ENCODE measurements at regions of chr1 and their contacts with region 1.

Region 1: GRCh38 chr1:156456622-156457465 is 43.7 kb downstream of the MEF2D start:
- DNase-seq: peak; percentile 98 to 99 (median 98)
- H3K4me3 ChIP-seq: peak overlapping the region; percentile 36 to 81 (median 74)
- H3K27ac ChIP-seq: peak overlapping the region; percentile 64 to 89
- H3K4me1 ChIP-seq: peaks cover 5 to 26% (median 17%) of the 10 kb centered on the region in 4 experiments
- H3K27me3 ChIP-seq: peaks cover 0 to 1% (median 0%) of the 10 kb centered on the region in 5 experiments

Region 2: DNA sequence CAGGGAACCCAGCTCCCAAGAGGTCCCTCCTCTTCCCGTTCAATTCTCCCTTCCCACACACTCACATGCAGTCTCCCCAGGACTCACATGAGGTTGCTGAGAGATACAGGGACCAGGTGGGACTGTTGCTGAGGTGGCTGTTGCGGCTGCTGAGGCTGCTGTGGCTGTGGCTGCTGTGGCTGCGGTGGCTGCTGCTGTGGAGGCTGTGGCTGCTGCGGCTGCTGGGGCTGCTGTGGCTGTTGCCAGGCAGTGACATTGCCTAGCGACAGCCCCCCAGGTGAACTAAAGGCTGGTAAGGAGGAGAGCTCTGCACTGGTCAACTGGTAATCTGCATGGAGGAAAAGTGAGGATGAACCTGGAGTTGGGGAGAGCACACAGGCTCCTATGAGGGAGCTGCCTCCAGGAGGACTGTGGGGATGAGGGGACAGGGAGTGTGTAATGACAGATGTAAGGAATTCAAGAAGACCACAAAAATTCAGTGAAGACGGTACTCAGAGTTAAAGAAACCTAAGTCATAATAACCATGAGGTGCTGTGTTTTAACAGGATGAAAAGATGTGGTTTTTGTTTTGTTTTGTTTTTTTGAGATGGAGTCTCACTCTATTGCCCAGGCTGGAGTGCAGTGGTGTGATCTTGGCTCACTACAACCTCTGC is 12.0 kb after region 1 on chr1:
- CTCF ChIA-PET with region 1: interaction called, 14 read pairs
- POLR2A ChIA-PET with region 1: interaction called, 4 read pairs
- DNase-seq: no peak
- H3K4me3 ChIP-seq: no peak overlapping the region
- H3K27ac ChIP-seq: no peak overlapping the region
- H3K4me1 ChIP-seq: no peaks in the 10 kb centered on the region
- H3K27me3 ChIP-seq: no peaks in the 10 kb centered on the region

Measured in common myeloid progenitor, CD34-positive (primary cell).